ENCODE measurements at regions of chr3 and their contacts with region 1.

Region 1: DNA sequence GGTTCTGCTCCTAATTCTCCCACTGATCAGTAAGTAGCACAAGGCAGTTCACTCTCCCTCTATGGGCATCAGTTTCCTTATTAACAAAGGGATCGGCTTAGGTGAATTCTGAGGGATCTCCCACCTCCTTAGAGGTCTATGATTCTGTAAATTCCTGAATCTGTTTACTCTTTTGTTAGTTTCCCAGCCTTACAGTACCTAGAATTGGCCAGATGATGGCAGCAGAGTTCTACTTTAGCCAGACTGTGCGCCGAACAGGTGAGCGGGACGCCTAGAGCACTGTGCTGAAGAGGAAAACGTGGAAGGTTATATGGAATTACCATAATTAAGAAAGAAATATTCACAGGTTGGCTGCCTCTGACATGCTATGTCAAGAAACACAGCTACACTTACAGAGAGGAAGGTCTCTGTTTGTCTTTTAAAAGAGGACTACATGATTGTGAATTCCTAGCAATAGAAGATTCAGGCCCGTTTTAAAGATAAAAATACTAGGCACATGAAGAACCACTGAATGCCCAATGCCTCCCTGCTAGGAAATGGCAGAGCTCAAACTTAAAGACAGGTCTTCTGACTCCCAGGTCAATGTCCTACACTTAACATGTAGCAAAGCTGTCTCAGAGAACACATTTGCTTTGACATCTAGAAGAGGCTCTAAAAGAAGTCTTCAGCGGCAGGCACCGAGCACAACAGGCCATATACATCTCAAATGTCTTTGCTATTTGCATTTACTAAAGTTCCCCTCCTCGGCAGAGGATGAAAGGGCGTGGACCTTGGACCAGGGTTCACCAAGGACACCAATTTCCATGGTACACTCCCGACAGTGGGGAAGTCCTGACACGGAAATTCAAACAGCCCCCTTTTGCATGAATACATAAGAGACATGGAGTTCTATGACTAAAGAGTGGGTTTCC is 259.9 kb downstream of the FGF12 start:
- DNase-seq: peak; percentile 19 to 47
- ATAC-seq: peak; percentile 58 to 83 (median 78)
- H3K4me3 ChIP-seq: no peak overlapping the region
- H3K27ac ChIP-seq: peak overlapping the region in 1 of 10 donors; percentile 26
- H3K4me1 ChIP-seq: peaks cover 0 to 9% (median 5%) of the 10 kb centered on the region in 9 donors
- H3K27me3 ChIP-seq: peaks cover 0 to 11% (median 0%) of the 10 kb centered on the region in 7 donors
- CTCF ChIP-seq: peak; percentile 81 to 96 (median 91)

Region 2: GRCh38 chr3:192553707-192554106 is 86.2 kb after region 1 on chr3:
- intact Hi-C with region 1: loop called in 3 of 10 experiments (anchors 5 to 10 kb)
- DNase-seq: no peak
- ATAC-seq: peak in 3 of 8 donors; percentile 17 to 73 (median 24)
- H3K4me3 ChIP-seq: no peak overlapping the region
- H3K27ac ChIP-seq: peak overlapping the region in 1 of 10 donors; percentile 21
- H3K4me1 ChIP-seq: peaks cover 0 to 18% (median 3%) of the 10 kb centered on the region in 9 donors
- H3K27me3 ChIP-seq: no peaks in the 10 kb centered on the region
- CTCF ChIP-seq: no peak

Region 3: DNA sequence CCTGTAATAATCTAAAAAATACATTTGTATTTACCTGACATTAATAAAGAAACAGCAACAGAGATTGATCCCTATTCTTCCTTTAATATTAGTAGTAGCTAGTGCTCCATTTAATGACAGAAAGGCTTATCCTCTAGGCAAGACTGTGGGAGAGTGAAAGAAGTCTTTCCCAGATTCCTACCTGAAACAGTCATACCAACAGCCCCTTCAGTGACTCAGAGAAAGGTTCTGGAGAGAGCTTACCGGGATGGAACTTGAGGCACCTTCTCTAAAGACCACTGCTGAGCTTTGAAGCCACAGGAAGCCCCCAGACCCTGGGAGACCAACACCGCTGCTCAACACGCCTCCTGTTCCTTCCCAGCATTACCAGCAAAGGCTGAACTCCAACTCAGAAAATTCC is 326.7 kb after region 1 on chr3:
- intact Hi-C with region 1: loop called in 1 of 10 experiments (anchors 10 kb)
- DNase-seq: no peak
- ATAC-seq: no peak
- H3K4me3 ChIP-seq: no peak overlapping the region
- H3K27ac ChIP-seq: no peak overlapping the region
- H3K4me1 ChIP-seq: no peaks in the 10 kb centered on the region
- H3K27me3 ChIP-seq: no peaks in the 10 kb centered on the region
- CTCF ChIP-seq: no peak

Region 4: DNA sequence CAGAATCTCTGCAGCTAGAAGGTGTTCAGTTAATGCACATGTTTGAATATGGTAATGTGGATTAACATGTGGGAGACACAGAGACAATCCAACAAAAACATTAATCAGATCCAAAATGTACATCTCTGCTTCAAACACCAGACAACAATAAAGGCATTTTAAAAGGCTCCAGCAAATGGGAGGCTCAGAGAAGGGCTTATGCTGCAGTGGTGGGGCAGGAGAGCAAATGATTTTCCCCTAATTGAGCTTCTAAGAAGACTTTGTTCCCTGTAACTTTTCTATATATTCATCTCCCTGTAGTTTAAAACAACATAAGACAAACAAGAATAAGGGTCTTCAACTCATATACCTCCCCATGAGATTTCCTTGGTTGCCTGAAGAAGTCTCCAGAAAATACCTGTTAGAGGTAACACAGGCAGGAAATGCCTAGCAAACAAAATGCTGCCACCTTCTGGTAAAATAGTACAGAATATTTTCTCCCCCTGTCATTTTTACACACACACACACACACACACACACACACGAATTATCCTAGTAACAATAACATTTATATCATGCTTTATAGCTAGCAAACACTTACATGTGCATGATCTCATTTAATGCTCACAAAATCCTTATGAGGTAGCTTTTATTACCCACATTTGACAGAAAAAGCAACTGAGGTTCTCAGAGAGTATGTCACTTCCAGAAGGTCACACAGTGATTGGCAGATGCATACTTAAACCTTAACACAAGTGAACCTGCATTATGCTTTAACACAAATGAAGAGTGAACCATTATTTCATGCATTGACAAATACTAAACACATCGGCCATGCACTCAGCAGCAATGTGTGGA is 573.6 kb after region 1 on chr3:
- intact Hi-C with region 1: loop called in 1 of 10 experiments (anchors 10 kb)
- DNase-seq: peak in 1 of 2 donors; percentile 11
- ATAC-seq: peak in 5 of 8 donors; percentile 23 to 65 (median 48)
- H3K4me3 ChIP-seq: no peak overlapping the region
- H3K27ac ChIP-seq: no peak overlapping the region
- H3K4me1 ChIP-seq: no peaks in the 10 kb centered on the region
- H3K27me3 ChIP-seq: no peaks in the 10 kb centered on the region
- CTCF ChIP-seq: peak; percentile 16 to 76 (median 58)

Region 5: DNA sequence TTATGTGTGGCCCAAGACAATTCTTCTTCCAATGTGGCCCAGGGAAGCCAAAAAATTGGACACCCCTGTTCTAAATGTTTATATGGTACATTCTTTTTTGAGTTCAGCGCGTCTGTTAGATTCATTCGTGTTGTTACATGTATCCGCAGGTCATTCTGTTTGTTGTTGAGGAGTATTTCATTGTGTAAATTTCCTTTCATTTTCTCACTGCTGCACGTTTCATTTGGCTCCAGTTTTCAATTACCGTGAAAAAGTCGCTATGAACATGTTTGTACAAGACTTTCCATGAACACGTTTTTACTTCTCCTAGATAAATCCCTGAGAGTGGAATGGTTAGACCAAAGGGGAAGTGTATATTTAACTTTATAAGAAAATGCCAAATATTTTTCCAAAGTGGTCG is 1118.0 kb after region 1 on chr3:
- intact Hi-C with region 1: loop called in 1 of 10 experiments (anchors 10 kb)
- DNase-seq: no peak
- ATAC-seq: no peak
- H3K4me3 ChIP-seq: no peak overlapping the region
- H3K27ac ChIP-seq: no peak overlapping the region
- H3K4me1 ChIP-seq: no peaks in the 10 kb centered on the region
- H3K27me3 ChIP-seq: no peaks in the 10 kb centered on the region
- CTCF ChIP-seq: no peak

Measured in heart right ventricle (tissue), 16 donors.